Kidney (tissue), 22 donors: ENCODE measurements at regions of chr1 and their contacts with region 1.

Region 1: GRCh38 chr1:203340112-203340804 is 10.7 kb downstream of the FMOD start:
- DNase-seq: peak in 4 of 5 donors; percentile 85 to 96 (median 90)
- H3K4me3 ChIP-seq: no peak overlapping the region
- H3K27ac ChIP-seq: no peak overlapping the region
- H3K4me1 ChIP-seq: no peaks in the 10 kb centered on the region
- H3K27me3 ChIP-seq: no peaks in the 10 kb centered on the region
- CTCF ChIP-seq: peak; percentile 95

Region 2: DNA sequence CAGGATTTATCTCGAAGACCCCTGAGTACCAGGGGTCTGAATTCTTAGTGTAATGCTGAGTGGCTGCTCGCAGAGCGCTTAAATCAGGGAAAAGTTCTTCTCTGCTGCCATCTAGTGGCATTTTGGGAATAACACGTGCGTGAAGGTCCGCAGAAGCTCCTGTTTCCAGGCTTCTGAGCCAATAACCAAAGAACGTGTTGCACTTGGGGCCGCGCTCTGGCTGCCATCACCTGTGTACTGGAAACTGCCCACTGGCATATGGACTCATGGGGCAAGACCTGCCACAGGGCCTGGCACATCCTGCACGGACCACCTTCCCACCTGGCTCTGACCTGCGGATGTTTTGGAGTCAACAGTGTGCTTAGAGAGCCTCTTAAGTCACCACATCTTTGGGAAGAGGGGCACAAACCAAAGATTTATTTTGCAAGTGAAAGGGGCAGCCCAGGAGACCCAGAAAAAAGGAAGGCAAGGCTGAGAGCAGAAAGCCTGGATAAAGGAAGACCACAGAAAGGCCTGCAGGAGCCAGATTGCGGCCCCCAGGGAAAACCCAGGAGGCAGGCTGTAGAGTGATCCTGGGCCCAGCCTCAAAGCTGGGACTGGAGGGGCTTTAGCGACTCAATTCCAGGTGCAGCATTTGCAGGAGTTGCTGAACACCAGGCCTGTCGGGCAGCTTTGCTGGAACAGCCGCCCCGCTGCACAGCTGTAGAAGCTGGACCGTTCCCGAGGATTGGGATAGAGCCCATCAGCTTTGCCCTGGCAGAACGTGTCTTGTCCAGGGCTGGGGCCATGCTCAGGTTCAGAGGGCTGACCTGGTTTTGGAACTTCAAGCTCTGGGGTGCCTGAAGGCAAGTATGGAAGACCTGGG is 123.8 kb before region 1 on chr1:
- intact Hi-C with region 1: no loop called
- DNase-seq: peak in 4 of 5 donors; percentile 79 to 92 (median 86)
- H3K4me3 ChIP-seq: no peak overlapping the region
- H3K27ac ChIP-seq: no peak overlapping the region
- H3K4me1 ChIP-seq: no peaks in the 10 kb centered on the region
- H3K27me3 ChIP-seq: no peaks in the 10 kb centered on the region
- CTCF ChIP-seq: peak; percentile 86

Region 3: DNA sequence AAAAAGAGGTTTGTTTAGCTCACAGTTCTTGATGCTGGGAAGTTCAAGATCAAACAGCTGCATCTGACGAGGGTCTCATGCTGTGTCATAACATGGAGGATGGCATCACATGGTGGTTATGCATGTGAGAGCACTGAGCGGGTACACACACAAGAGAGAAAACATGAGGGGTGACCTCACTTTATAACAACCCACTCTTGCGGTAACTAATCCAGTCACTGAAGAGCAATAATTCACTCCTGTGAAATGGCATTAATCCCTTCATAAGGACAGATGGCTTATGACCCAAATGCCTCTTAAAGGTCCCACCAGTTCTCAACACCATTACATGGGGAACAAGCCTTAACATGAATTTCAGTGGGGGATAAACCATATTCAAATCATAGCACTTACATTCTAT is 87.6 kb before region 1 on chr1:
- intact Hi-C with region 1: no loop called
- DNase-seq: no peak
- H3K4me3 ChIP-seq: no peak overlapping the region
- H3K27ac ChIP-seq: no peak overlapping the region
- H3K4me1 ChIP-seq: no peaks in the 10 kb centered on the region
- H3K27me3 ChIP-seq: no peaks in the 10 kb centered on the region
- CTCF ChIP-seq: no peak

Region 4: GRCh38 chr1:203463469-203464062 is 123.3 kb after region 1 on chr1:
- intact Hi-C with region 1: no loop called
- DNase-seq: peak in 2 of 5 donors; percentile 59 to 71
- H3K4me3 ChIP-seq: no peak overlapping the region
- H3K27ac ChIP-seq: no peak overlapping the region
- H3K4me1 ChIP-seq: peaks cover 0 to 15% (median 14%) of the 10 kb centered on the region in 3 donors
- H3K27me3 ChIP-seq: no peaks in the 10 kb centered on the region
- CTCF ChIP-seq: no peak

Region 5: DNA sequence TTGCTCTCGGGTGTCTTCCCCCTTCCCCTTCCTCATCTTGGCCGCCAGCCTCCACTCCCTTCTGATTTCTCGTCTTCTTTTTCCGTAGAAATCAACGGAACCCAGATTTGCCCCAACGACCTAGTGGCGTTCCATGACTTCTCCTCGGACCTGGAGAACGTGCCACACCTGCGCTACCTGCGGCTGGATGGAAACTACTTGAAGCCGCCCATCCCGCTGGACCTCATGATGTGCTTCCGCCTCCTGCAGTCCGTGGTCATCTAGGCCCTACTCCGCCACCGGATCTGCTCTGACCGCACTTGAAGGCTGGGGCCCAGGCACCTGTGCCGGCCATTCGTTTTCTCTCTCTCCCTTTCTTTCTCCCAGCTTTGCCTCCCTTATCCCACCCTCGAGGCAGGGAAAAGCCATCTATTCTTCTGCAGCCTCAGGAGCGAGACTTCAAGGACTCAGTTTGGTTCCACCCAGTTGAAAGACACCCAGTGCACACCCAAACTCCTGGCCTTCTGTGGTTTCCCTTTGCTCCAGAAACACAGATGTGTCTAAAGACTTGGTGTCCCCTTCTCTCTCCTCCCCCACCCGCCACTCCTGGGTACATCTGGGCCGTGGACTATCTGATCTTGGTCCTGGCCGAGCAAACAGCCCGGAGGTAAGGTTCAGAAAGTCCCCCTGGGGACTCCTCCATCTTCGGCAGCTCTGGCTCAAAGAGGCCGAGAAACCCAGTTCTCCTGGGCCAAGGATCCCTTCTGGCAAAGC is 146.5 kb after region 1 on chr1:
- intact Hi-C with region 1: loop called (anchors 5 kb)
- DNase-seq: no peak
- H3K4me3 ChIP-seq: peak overlapping the region in 1 of 3 donors; percentile 62
- H3K27ac ChIP-seq: peak overlapping the region; percentile 25 to 68
- H3K4me1 ChIP-seq: peaks cover 0 to 6% (median 0%) of the 10 kb centered on the region in 3 donors
- H3K27me3 ChIP-seq: no peaks in the 10 kb centered on the region
- CTCF ChIP-seq: no peak